ENCODE measurements at regions of chr14 and their contacts with region 1.

Region 1: GRCh38 chr14:73886449-73887317 is at the start of gene ZNF410:
- DNase-seq: peak; percentile 97
- ATAC-seq: peak; percentile 97
- H3K4me3 ChIP-seq: peak within 1 kb of the TSS; percentile 83
- H3K27ac ChIP-seq: peak within 1 kb of the TSS; percentile 63
- H3K4me1 ChIP-seq: peaks cover 14% of the 10 kb centered on the region
- H3K27me3 ChIP-seq: no peaks in the 10 kb centered on the region
- CTCF ChIP-seq: no peak
- total RNA-seq, gene ZNF410: 44.9 and 46.8 TPM in 2 replicates

Region 2: GRCh38 chr14:73777401-73777800 is 109.3 kb before region 1 on chr14:
- CTCF ChIA-PET with region 1: no interaction called
- POLR2A ChIA-PET with region 1: no interaction called
- intact Hi-C with region 1: no loop called
- DNase-seq: no peak
- ATAC-seq: no peak
- H3K4me3 ChIP-seq: no peak overlapping the region
- H3K27ac ChIP-seq: no peak overlapping the region
- H3K4me1 ChIP-seq: no peaks in the 10 kb centered on the region
- H3K27me3 ChIP-seq: no peaks in the 10 kb centered on the region
- CTCF ChIP-seq: no peak

Region 3: DNA sequence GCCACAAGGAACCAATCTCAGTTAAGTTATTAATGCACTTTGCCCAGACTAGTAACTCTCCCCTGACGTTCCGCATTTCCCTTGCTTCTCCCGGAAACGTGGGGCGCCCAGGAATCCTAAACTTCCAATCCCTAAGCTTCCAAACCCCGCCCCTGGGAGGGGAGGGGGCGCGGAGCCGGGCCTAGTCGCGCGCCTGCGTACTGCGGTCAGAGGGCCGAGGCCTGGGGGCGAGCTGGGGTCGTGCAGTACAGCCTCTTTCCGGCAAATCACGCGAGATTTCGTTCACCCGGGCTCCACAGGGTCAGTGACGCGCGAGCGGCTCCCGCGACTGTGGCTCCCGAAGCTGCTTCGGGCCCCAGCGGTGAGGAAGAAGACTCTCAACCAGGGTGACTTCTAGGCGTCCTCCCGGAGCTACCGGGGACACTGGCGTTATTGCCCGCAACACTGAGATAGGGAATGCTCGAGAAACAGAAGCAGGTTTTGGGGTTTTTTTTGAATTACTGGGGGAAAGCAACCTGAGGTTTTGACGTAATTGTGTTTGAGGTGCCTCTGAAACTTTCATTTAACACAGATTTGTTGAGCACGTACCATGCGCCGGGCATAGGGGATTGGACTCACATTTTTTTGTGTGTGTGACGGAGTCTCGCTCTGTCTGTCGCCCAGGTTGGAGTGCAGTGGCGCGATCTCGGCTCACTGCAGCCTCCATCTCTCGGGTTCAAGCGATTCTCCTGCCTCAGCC is 34.9 kb before region 1 on chr14 and contains the start of gene PTGR2:
- CTCF ChIA-PET with region 1: no interaction called
- POLR2A ChIA-PET with region 1: interaction called, 11 read pairs
- intact Hi-C with region 1: no loop called
- DNase-seq: peak; percentile 97
- ATAC-seq: peak; percentile 85
- H3K4me3 ChIP-seq: peak within 1 kb of the TSS; percentile 73
- H3K27ac ChIP-seq: peak within 1 kb of the TSS; percentile 80
- H3K4me1 ChIP-seq: peaks cover 17% of the 10 kb centered on the region
- H3K27me3 ChIP-seq: no peaks in the 10 kb centered on the region
- CTCF ChIP-seq: no peak
- total RNA-seq, gene PTGR2: 6.2 and 7.9 TPM in 2 replicates